Heart right ventricle (tissue), 16 donors: ENCODE measurements at regions of chrX and their contacts with region 1.

Region 1: GRCh38 chrX:133171962-133172708 is 46.0 kb downstream of the TFDP3 start:
- DNase-seq: no peak
- ATAC-seq: no peak
- H3K4me3 ChIP-seq: no peak overlapping the region
- H3K27ac ChIP-seq: no peak overlapping the region
- H3K4me1 ChIP-seq: no peaks in the 10 kb centered on the region
- H3K27me3 ChIP-seq: peaks cover 0 to 42% (median 0%) of the 10 kb centered on the region in 7 donors
- CTCF ChIP-seq: peak in 6 of 9 donors; percentile 18 to 44 (median 34)

Region 2: DNA sequence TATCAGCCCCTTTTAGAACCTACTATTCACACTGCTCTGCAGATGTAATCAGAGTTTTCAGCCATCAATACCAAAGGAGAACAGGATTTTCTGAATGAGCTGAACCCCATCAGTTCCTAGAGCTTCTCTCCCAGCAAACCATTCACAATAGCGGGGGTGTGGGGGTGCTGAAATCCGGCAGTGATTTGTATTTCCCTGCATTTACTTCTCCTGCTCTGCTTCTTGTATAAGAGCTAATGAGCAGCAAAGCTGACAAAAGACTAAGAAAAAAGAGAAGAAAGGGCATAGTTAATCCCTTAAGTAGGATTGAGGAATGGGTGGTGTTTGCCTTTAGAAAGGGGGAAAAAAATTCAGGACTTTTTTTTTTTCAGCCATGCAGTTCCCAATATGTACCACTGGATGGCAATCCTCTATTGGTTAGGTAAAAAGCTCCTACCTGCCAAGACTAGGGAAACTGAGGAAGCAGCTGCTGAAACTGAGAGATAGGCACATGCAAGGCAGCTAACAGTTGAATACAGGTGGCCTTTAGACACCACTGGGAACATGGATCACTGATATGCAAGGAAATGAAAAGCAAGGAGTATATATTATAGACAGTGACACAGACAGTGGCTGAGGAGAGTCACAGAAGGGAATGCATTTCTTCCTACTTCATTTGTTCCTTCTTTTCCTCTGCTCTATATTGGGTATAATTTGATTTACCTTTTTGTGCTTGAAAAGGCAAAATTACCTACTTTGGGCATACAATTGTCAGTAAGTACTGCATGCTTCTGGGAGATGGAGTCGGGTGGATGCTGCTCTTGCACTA is 431.6 kb before region 1 on chrX:
- intact Hi-C with region 1: loop called in 1 of 10 experiments (anchors 10 kb)
- DNase-seq: no peak
- ATAC-seq: no peak
- H3K4me3 ChIP-seq: no peak overlapping the region
- H3K27ac ChIP-seq: no peak overlapping the region
- H3K4me1 ChIP-seq: no peaks in the 10 kb centered on the region
- H3K27me3 ChIP-seq: peaks cover 0 to 50% (median 0%) of the 10 kb centered on the region in 7 donors
- CTCF ChIP-seq: peak; percentile 30 to 63 (median 50)

Region 3: DNA sequence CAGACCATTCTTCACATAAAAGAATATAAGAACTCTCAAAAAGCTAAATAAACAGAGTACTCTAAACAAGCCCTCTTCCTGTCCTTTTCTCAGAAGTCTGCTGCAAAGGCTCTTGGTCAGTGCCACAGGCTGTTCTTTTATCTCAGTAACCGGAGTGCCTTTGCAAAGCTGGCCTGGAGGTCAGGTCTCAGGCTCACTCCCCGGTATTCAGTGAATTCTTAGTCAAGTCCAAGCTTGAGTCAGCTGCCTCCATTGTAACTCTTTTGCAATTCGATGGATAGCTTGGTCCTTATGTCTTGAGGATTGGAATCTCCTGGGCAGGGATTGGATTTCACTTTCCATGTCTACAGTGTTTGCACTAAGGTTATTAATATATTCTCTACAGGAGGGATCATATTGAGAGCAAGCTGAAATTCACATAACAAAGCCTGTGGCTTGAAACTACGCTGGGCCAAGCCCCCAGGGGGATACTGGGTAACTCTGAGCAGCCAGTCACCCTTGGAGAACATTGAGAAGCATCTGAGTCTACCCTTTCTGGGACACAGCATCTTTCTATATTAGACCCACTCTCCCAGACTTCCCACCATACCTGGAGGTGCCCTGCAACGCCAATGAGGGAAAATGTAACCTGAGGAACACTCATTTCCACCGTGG is 203.7 kb before region 1 on chrX:
- intact Hi-C with region 1: loop called in 1 of 10 experiments (anchors 10 kb)
- DNase-seq: no peak
- ATAC-seq: no peak
- H3K4me3 ChIP-seq: no peak overlapping the region
- H3K27ac ChIP-seq: no peak overlapping the region
- H3K4me1 ChIP-seq: no peaks in the 10 kb centered on the region
- H3K27me3 ChIP-seq: peaks cover 0 to 78% (median 0%) of the 10 kb centered on the region in 7 donors
- CTCF ChIP-seq: no peak

Region 4: DNA sequence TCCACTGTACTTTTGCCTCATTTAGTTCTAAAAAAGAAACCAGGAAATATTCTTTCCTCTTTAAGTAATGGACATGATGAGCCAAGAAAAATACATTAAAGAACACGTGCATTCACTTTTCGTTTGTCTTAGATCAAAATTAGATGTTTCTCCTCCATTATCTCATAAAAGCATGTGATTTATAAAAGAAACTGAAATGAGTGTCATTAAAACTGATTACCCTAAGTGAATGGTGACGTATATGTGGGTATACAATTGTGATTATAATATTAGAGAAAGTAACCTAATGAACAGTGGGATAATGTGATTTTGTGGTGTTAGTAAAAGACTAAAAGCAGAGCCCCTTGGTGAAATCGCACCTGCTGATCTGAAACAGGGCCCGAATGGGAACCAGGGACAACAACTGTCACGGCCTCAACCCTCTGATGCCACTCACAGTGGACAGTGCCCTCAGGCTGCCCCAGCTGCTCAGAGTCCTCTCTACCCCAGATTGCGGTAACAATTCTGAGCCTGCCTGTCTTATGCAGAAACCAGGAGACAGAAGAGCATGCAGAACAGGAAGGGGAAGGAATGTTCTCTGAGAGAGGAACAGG is 188.0 kb before region 1 on chrX:
- intact Hi-C with region 1: loop called in 2 of 10 experiments (anchors 5 to 10 kb)
- DNase-seq: no peak
- ATAC-seq: no peak
- H3K4me3 ChIP-seq: no peak overlapping the region
- H3K27ac ChIP-seq: no peak overlapping the region
- H3K4me1 ChIP-seq: no peaks in the 10 kb centered on the region
- H3K27me3 ChIP-seq: peaks cover 0 to 24% (median 0%) of the 10 kb centered on the region in 7 donors
- CTCF ChIP-seq: no peak

Region 5: GRCh38 chrX:133068461-133068860 is 103.7 kb before region 1 on chrX:
- intact Hi-C with region 1: no loop called
- DNase-seq: no peak
- ATAC-seq: no peak
- H3K4me3 ChIP-seq: no peak overlapping the region
- H3K27ac ChIP-seq: no peak overlapping the region
- H3K4me1 ChIP-seq: no peaks in the 10 kb centered on the region
- H3K27me3 ChIP-seq: peaks cover 0 to 13% (median 0%) of the 10 kb centered on the region in 7 donors
- CTCF ChIP-seq: no peak

Region 6: DNA sequence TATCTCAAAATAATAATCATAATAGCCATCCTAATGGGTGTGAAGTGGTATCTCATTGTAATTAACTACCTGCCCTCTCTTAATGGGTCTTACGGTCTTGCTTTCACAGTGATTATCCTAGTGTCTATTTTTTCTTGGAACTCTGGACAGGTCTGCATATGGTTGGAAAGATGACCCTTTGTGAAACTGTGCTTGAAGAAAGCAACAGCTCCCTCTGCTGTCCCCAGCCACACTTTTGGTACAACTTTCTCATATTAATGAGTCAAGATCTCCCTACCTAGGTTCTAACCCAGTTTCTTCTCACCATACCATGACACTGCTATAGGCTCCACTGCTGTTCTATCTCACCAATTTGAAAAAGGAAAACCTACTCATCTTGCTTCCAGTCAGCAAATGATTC is 43.6 kb after region 1 on chrX:
- intact Hi-C with region 1: no loop called
- DNase-seq: no peak
- ATAC-seq: no peak
- H3K4me3 ChIP-seq: no peak overlapping the region
- H3K27ac ChIP-seq: no peak overlapping the region
- H3K4me1 ChIP-seq: no peaks in the 10 kb centered on the region
- H3K27me3 ChIP-seq: peaks cover 0 to 23% (median 0%) of the 10 kb centered on the region in 7 donors
- CTCF ChIP-seq: peak in 6 of 9 donors; percentile 16 to 40 (median 27)